MCF 10A (cell line): ENCODE measurements at regions of chr6 and their contacts with region 1.

Region 1: DNA sequence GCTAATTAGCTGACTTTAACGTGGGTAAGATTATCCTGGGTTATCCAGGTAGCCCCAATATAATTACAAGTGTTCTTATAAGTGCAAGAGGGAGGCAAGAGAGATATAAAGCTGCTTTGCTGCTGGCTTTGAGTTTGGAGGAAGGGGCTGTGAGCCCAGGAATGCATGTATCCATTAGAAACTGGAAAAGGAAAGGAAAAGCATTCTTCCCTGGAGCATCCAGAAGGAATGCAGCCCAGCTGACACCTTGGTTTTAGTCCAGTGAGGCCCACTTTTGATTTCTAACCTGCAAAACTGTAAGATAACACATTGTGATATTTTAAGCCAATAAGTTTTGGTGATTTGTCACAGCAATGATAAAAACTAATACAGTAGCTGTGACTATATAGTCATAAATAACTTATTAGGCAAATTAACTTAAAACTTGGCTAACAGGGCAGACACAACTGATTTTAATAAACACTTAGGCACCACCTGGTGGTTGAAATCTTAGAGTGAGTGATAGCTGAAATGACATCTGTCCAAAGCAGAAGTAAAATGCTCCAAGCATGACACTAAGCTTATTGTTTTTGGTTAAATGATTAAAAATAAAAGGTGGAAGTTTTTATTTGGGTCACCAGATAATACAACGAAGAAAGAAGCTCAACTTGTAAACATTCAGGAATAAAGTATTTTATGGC is 35.6 kb downstream of the ADGRF4 start:
- DNase-seq: peak; percentile 65
- H3K4me3 Mint-ChIP-seq: no peak overlapping the region
- H3K27ac Mint-ChIP-seq: no peak overlapping the region
- H3K4me1 Mint-ChIP-seq: peaks cover 15% of the 10 kb centered on the region
- H3K27me3 Mint-ChIP-seq: no peaks in the 10 kb centered on the region
- CTCF ChIP-seq: peak; percentile 59

Region 2: DNA sequence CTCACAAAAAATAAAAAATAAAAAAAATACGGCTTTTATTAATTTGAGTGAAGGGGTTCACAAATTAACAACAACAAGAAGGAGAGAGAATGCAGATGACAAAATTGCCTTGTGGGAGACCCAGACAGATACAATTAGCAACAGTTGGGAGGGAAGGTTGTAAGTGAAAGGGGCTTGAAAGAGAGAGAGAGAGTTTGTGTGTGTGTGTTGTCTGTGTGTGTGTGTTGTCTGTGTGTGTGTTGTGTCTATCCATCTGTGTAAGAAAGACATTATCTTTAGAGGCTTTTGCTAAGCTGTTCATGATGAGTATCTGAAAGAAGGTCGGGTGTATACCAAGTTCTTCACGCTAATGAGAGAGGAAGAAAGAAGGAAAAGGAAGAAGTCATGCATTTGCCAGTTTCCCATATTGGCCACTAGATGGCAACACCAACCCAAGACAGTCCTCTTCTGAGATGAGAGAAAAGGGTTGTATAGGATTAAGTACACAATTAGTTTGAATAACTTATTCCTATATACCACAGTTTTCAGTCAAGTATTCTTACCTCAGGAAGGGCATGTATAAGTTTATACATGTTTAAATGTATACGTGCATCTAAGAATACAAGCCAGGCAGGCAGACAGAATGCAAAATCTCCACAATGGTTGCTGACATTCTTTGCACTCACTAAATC is 320.1 kb before region 1 on chr6:
- CTCF ChIA-PET with region 1: interaction called, 24 read pairs
- POLR2A ChIA-PET with region 1: no interaction called
- intact Hi-C with region 1: loop called (anchors 1 kb)
- DNase-seq: peak; percentile 81
- H3K4me3 Mint-ChIP-seq: peak overlapping the region; percentile 68
- H3K27ac Mint-ChIP-seq: peak overlapping the region; percentile 94
- H3K4me1 Mint-ChIP-seq: peaks cover 18% of the 10 kb centered on the region
- H3K27me3 Mint-ChIP-seq: no peaks in the 10 kb centered on the region
- CTCF ChIP-seq: peak; percentile 75

Region 3: DNA sequence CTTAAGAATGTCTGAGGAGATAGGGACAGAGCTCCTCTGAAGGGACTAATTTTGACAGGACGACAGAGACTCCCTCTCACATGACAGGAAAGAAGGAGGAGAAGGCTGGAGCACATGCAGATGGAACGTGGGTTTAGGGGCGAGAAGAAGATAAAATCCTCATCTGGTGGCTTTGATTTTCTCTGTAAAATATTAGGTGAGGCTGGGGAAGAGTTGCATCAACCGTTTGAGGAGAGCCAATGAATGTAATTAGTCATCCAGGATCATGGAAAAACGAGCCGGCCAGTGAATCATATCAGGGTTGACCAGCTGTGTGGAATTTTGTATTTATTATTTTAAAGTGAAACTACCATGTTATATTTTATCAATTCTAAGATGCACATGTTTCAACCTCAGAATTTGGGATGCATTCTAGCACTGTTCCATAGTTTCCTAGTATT is 82.5 kb before region 1 on chr6:
- CTCF ChIA-PET with region 1: interaction called, 44 read pairs
- POLR2A ChIA-PET with region 1: interaction called, 6 read pairs
- intact Hi-C with region 1: loop called (anchors 1 kb)
- DNase-seq: peak; percentile 66
- H3K4me3 Mint-ChIP-seq: no peak overlapping the region
- H3K27ac Mint-ChIP-seq: no peak overlapping the region
- H3K4me1 Mint-ChIP-seq: peaks cover 11% of the 10 kb centered on the region
- H3K27me3 Mint-ChIP-seq: no peaks in the 10 kb centered on the region
- CTCF ChIP-seq: no peak

Region 4: GRCh38 chr6:47669684-47670513 is 64.1 kb before region 1 on chr6:
- CTCF ChIA-PET with region 1: interaction called, 13 read pairs
- POLR2A ChIA-PET with region 1: interaction called, 4 read pairs
- intact Hi-C with region 1: no loop called
- DNase-seq: peak; percentile 82
- H3K4me3 Mint-ChIP-seq: peak overlapping the region; percentile 47
- H3K27ac Mint-ChIP-seq: peak overlapping the region; percentile 91
- H3K4me1 Mint-ChIP-seq: peaks cover 28% of the 10 kb centered on the region
- H3K27me3 Mint-ChIP-seq: no peaks in the 10 kb centered on the region
- CTCF ChIP-seq: no peak

Region 5: GRCh38 chr6:47690209-47690608 is 43.8 kb before region 1 on chr6:
- CTCF ChIA-PET with region 1: interaction called, 25 read pairs
- POLR2A ChIA-PET with region 1: interaction called, 3 read pairs
- intact Hi-C with region 1: loop called (anchors 1 kb)
- DNase-seq: peak; percentile 31
- H3K4me3 Mint-ChIP-seq: no peak overlapping the region
- H3K27ac Mint-ChIP-seq: no peak overlapping the region
- H3K4me1 Mint-ChIP-seq: no peaks in the 10 kb centered on the region
- H3K27me3 Mint-ChIP-seq: no peaks in the 10 kb centered on the region
- CTCF ChIP-seq: no peak

Region 6: DNA sequence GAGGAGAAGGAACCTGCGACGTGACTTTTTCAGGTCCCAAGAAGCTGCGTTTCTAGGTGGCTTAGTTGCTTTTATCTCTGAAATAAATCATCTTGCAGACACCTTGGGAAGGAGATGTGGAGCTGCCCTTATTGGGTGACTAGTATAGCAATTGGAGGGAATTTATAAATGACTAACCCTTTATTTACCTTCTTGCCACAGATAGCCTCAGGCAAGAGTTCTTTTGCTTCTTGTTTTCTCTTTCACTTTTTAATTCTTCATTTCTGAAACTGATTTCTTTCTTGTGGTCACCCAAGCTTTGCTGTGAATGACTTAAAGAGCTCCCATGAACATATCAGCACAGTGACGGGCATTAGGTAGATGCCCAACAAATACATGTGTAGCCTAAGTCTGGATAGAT is 32.7 kb before region 1 on chr6:
- CTCF ChIA-PET with region 1: interaction called, 12 read pairs
- POLR2A ChIA-PET with region 1: interaction called, 47 read pairs
- intact Hi-C with region 1: loop called (anchors 2 kb)
- DNase-seq: peak; percentile 84
- H3K4me3 Mint-ChIP-seq: peak overlapping the region; percentile 12
- H3K27ac Mint-ChIP-seq: peak overlapping the region; percentile 95
- H3K4me1 Mint-ChIP-seq: peaks cover 36% of the 10 kb centered on the region
- H3K27me3 Mint-ChIP-seq: no peaks in the 10 kb centered on the region
- CTCF ChIP-seq: no peak

Region 7: GRCh38 chr6:47780510-47781356 is 46.7 kb after region 1 on chr6:
- CTCF ChIA-PET with region 1: interaction called, 41 read pairs
- POLR2A ChIA-PET with region 1: no interaction called
- intact Hi-C with region 1: loop called (anchors 2 kb)
- DNase-seq: peak; percentile 76
- H3K4me3 Mint-ChIP-seq: no peak overlapping the region
- H3K27ac Mint-ChIP-seq: peak overlapping the region; percentile 39
- H3K4me1 Mint-ChIP-seq: no peaks in the 10 kb centered on the region
- H3K27me3 Mint-ChIP-seq: no peaks in the 10 kb centered on the region
- CTCF ChIP-seq: peak; percentile 41

Region 8: GRCh38 chr6:47836639-47837038 is 102.6 kb after region 1 on chr6:
- CTCF ChIA-PET with region 1: no interaction called
- POLR2A ChIA-PET with region 1: no interaction called
- intact Hi-C with region 1: no loop called
- DNase-seq: peak; percentile 22
- H3K4me3 Mint-ChIP-seq: no peak overlapping the region
- H3K27ac Mint-ChIP-seq: no peak overlapping the region
- H3K4me1 Mint-ChIP-seq: no peaks in the 10 kb centered on the region
- H3K27me3 Mint-ChIP-seq: no peaks in the 10 kb centered on the region
- CTCF ChIP-seq: no peak